ENCODE measurements at regions of chr5 and their contacts with region 1.

Region 1: DNA sequence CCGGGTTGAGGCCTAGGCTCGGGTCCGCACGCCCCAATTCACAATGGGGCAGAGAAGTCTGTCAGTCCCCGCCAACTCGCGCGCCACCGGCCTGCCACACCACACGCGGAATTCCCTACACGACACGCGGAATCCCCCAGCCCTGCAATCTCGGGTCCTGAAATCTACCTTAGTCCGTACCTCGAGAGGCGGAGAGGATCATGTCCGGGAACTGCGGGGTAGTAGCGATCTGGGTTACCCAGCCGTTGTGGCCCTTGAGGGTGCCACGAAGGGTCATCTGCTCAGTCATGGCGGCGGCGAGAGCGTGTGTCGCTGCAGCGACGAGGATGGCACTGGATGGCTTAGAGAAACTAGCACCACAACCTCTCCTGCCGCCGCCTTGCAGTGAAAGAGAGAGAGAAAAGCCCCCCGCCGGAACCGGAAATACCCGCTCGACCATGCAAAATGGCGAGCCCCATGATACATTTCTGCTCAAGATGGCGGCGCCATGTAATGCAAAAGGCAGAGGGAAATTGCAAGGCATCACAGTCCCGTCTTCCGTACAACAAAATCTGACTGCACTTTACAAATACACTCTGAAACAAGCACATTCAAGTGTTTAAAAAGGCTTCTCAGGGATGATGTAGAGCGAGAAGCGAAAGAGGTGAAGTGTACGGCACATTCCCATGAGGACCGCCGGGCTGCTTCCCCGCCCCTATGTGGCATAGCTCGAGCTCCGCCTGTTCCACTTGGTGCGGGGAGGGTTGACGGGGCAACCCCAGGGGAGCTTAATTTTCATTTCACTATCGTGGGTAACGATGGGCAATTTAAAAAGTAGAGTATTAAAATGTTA is at the start of gene RACK1:
- DNase-seq: peak; percentile 90
- H3K4me3 ChIP-seq: peak within 1 kb of the TSS; percentile 56 to 86 (median 63)
- H3K27ac ChIP-seq: peak within 1 kb of the TSS; percentile 96 to 97 (median 97)
- H3K4me1 ChIP-seq: peaks cover 30 to 53% (median 47%) of the 10 kb centered on the region in 4 donors
- H3K27me3 ChIP-seq: no peaks in the 10 kb centered on the region
- CTCF ChIP-seq: no peak
- EP300 ChIP-seq: no peak
- POLR2A ChIP-seq: peak; percentile 76
- total RNA-seq, gene RACK1: 1,633 to 1,930 (median 1,753) TPM

Region 2: DNA sequence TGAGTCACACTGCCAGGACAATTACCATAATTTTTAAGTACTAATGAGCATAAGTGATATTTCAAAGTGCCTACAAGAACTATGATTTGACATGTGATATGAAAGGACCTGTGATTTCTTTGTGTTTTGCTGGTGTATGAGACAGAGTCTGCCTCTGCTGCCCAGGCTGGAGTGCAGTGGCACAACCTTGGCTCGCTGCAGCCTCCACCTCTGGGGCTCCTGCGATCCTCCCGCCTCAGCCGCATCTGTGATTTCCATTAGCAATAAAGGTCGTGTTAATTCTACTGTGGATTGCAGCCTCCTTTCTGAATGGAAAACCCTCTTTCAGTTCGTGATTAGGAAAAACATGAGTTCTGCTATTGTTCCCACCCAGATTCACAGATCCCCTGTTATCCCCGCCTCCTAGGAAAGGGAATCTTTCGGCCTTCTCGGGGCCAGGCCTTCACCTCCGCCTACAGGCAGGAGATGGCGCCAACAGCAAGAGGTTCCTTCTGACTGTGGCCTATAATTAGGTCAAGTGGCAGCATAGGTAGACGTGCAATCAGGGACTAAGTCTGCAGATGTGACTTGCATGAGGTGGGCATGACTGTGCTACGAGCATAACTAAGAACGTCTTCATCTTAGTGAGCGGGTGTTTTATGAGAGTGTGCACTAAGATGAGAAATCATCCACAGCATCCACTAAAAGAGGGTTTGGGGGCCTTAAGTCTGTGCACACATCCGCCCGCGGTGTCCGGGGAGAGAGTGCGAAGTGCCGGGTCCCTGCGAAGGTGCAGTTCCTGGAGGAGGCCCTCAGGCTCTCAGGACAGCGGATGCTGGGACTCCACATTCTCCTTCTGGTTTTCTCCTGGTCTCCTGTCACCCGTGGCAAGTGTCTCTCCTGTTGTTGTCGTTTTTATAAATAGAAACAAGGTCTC is 61.8 kb before region 1 on chr5:
- in situ Hi-C with region 1: no loop called
- intact Hi-C with region 1: loop called (anchors 10 kb)
- DNase-seq: peak; percentile 79
- H3K4me3 ChIP-seq: no peak overlapping the region
- H3K27ac ChIP-seq: no peak overlapping the region
- H3K4me1 ChIP-seq: peaks cover 0 to 18% (median 9%) of the 10 kb centered on the region in 4 donors
- H3K27me3 ChIP-seq: peaks cover 7% of the 10 kb centered on the region
- CTCF ChIP-seq: peak; percentile 66 to 82 (median 79)
- EP300 ChIP-seq: no peak
- POLR2A ChIP-seq: no peak